Mammary epithelial cell (primary cell): ENCODE measurements at regions of chr6 and their contacts with region 1.

Region 1: GRCh38 chr6:71190809-71191208 is 97.8 kb upstream of the OGFRL1 start:
- DNase-seq: peak; percentile 5
- H3K4me3 ChIP-seq: no peak overlapping the region
- H3K27ac ChIP-seq: no peak overlapping the region
- H3K4me1 ChIP-seq: peaks cover 10% of the 10 kb centered on the region
- H3K27me3 ChIP-seq: no peaks in the 10 kb centered on the region
- CTCF ChIP-seq: peak in 1 of 2 donors; percentile 31

Region 2: GRCh38 chr6:71091173-71091572 is 99.6 kb before region 1 on chr6:
- CTCF ChIA-PET with region 1: no interaction called
- dilution Hi-C with region 1: loop called (anchors 5 kb)
- in situ Hi-C with region 1: no loop called
- intact Hi-C with region 1: no loop called
- DNase-seq: no peak
- H3K4me3 ChIP-seq: no peak overlapping the region
- H3K27ac ChIP-seq: no peak overlapping the region
- H3K4me1 ChIP-seq: no peaks in the 10 kb centered on the region
- H3K27me3 ChIP-seq: no peaks in the 10 kb centered on the region
- CTCF ChIP-seq: no peak

Region 3: GRCh38 chr6:71139249-71139648 is 51.6 kb before region 1 on chr6:
- CTCF ChIA-PET with region 1: no interaction called
- dilution Hi-C with region 1: no loop called
- in situ Hi-C with region 1: no loop called
- intact Hi-C with region 1: no loop called
- DNase-seq: peak; percentile 73
- H3K4me3 ChIP-seq: no peak overlapping the region
- H3K27ac ChIP-seq: no peak overlapping the region
- H3K4me1 ChIP-seq: peaks cover 19% of the 10 kb centered on the region
- H3K27me3 ChIP-seq: no peaks in the 10 kb centered on the region
- CTCF ChIP-seq: no peak

Region 4: DNA sequence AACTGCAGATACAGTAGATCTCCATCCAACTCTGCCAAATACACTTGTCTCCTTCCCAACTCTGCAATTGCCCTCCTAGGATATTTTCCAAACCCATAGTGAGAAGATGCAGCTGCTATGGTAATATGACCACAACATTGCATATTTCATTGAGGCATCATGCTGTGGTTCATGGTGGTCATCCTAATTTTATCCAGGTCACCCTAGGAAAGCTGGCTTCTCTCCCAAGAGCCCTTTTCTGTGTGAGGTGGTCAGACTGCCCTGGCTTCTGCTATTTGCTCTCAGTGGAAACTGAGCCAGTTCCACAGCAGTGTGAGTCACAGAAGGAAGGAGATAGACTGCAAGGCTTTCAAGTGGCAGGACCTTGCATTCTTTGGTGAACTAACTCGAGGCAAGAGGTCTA is 103.3 kb after region 1 on chr6:
- CTCF ChIA-PET with region 1: interaction called, 3 read pairs
- dilution Hi-C with region 1: loop called (anchors 5 kb)
- in situ Hi-C with region 1: no loop called
- intact Hi-C with region 1: no loop called
- DNase-seq: no peak
- H3K4me3 ChIP-seq: no peak overlapping the region
- H3K27ac ChIP-seq: no peak overlapping the region
- H3K4me1 ChIP-seq: peaks cover 19% of the 10 kb centered on the region
- H3K27me3 ChIP-seq: no peaks in the 10 kb centered on the region
- CTCF ChIP-seq: no peak

Region 5: DNA sequence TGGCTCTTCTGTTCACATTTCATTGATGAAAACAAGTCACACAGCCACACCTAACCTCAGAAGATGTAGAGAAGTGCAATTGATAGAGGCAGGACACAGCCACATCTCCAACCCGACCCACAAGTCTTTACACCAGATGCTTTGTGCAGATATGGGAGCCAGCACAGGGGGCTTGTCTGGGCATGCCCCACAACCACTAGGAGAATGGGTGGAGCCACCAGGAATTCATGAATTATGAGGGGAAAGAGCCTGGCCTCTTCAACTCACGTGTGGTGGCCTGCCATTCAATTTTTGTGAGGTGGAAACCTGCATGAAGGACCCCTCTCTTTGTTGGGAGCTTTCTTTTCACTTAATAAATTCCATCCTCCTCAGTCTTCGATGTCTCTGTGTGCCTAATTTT is 176.9 kb after region 1 on chr6:
- CTCF ChIA-PET with region 1: interaction called, 10 read pairs
- dilution Hi-C with region 1: no loop called
- in situ Hi-C with region 1: no loop called
- intact Hi-C with region 1: no loop called
- DNase-seq: peak; percentile 67
- H3K4me3 ChIP-seq: no peak overlapping the region
- H3K27ac ChIP-seq: peak overlapping the region; percentile 41
- H3K4me1 ChIP-seq: peaks cover 20% of the 10 kb centered on the region
- H3K27me3 ChIP-seq: no peaks in the 10 kb centered on the region
- CTCF ChIP-seq: no peak

Region 6: GRCh38 chr6:71510057-71510713 is 319.4 kb after region 1 on chr6:
- CTCF ChIA-PET with region 1: no interaction called
- dilution Hi-C with region 1: no loop called
- in situ Hi-C with region 1: loop called (anchors 25 kb)
- intact Hi-C with region 1: loop called (anchors 1 kb)
- DNase-seq: peak; percentile 58
- H3K4me3 ChIP-seq: no peak overlapping the region
- H3K27ac ChIP-seq: no peak overlapping the region
- H3K4me1 ChIP-seq: peaks cover 2% of the 10 kb centered on the region
- H3K27me3 ChIP-seq: no peaks in the 10 kb centered on the region
- CTCF ChIP-seq: peak; percentile 61 to 72